Activated T-helper 2 cell treated with anti-CD3 and anti-CD28 coated beads, Interferon-gamma antibody, Interleukin-2, Interleukin-4, amounts not matched to agents 10 μg/mL and 5 μg/mL and 100 μg/mL, durations not matched to agents 14 hours and 24 hours and 36 hours (primary cell): ENCODE measurements at regions of chr2 and their contacts with region 1.

Region 1: DNA sequence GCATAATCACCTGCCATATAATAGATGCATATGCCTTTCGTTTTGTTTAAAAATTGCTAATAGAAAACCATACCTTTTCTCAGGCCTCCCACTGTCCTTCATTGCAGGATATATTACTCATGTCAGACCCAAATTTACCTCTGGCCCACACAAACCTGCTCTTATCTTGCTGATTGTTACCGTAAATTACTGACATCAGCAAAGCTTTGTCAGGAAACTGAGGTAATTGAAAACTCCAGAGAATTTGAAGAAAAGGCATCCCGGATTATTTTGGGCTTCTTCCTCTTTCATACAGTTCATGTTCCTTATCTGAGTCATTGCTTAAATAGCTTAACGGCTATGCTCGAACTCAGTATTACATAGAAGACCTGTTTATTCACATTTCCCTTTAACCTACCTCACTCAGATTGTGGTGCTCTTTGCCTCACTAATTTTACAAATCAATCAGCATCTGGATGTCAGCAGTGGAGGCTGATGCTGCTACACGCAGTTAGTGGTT is 145.7 kb downstream of the ZEB2 start:
- DNase-seq: no peak
- H3K4me3 Mint-ChIP-seq: no peak overlapping the region
- H3K27ac Mint-ChIP-seq: peak overlapping the region; percentile 86
- H3K4me1 Mint-ChIP-seq: peaks cover 83% of the 10 kb centered on the region
- H3K27me3 Mint-ChIP-seq: no peaks in the 10 kb centered on the region

Region 2: GRCh38 chr2:144183727-144184126 is 190.5 kb before region 1 on chr2:
- intact Hi-C with region 1: loop called (anchors 5 kb)
- DNase-seq: peak; percentile 76
- H3K4me3 Mint-ChIP-seq: peak overlapping the region; percentile 44
- H3K27ac Mint-ChIP-seq: peak overlapping the region; percentile 94
- H3K4me1 Mint-ChIP-seq: peaks cover 56% of the 10 kb centered on the region
- H3K27me3 Mint-ChIP-seq: no peaks in the 10 kb centered on the region

Region 3: DNA sequence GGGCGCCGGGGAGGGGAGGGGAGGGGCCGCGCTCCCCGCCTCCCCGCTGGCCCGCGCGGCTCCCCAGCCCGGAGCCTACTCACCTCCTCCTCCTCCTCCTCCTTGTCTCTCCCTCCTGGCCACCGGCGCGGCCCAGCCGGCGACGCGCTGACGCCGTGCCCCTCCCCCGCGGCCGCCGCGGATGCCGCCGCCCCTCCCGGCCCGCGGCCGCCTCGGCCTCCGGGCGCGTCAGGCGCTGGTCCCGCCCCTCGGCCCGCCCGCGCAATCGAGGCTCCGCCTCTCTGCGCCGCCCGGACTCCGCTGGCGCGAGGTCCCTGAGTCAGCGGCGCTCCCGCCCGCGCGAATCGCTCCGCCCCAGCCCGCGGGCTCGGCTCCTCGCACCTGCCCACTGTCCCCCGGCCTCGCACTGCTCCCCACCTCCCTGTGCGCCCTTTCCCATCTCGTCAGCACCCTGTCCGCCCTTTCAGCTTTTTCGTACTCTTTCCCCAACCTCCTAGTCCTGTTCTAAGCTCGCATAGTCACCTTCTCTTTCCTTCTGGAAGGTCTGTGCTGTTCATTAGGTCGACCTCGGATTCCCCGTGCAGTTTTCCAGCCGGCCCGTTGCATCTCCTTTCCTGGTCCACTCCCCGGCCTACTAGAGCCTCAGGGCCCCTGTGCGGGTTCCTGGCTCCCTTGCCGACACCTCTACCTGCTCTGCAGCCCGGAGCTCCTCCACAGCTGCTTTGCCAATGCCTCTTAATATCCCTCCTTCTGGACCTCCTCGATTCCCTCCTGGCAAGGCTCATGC is 41.7 kb before region 1 on chr2:
- intact Hi-C with region 1: loop called (anchors 1 kb)
- DNase-seq: peak; percentile 88
- H3K4me3 Mint-ChIP-seq: peak overlapping the region; percentile 85
- H3K27ac Mint-ChIP-seq: peak overlapping the region; percentile 95
- H3K4me1 Mint-ChIP-seq: peaks cover 46% of the 10 kb centered on the region
- H3K27me3 Mint-ChIP-seq: no peaks in the 10 kb centered on the region

Region 4: DNA sequence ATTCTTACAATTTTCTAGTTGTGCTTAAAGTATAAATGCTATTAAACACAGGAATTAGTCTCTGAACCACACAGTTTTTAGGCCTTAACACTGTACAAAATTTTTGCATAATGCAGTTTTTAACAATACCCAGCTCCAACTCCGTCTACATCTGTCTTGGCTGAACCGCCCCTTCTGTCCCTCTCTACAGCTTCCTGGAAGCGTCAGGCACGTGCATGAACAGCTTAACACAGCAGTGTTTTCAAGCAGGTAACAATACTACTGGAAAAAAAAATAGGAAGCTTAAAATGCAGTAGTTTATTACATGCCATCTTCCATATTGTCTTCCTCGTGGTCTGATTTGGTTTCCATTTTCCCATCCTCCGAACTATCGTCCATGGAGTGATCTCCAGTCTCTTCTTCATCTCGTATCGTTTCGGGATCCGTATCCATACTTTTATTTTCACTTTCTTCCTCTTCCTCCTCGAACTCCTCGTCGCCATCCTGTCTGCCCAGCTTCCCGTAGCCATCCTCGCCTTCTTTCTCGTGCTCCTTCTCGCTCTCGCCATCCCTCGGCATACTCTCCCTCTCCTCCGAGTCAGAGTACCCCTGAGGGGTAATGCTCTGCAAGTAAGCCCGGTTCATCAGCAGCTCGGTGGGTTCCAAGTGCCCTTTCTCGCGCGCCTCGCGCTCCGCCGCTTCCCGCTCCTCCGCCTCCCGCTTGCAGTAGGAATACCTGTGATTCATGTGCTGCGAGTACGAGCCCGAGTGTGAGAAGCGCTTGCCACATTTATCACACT is 15.1 kb after region 1 on chr2:
- intact Hi-C with region 1: no loop called
- DNase-seq: no peak
- H3K4me3 Mint-ChIP-seq: no peak overlapping the region
- H3K27ac Mint-ChIP-seq: no peak overlapping the region
- H3K4me1 Mint-ChIP-seq: peaks cover 4% of the 10 kb centered on the region
- H3K27me3 Mint-ChIP-seq: peaks cover 2% of the 10 kb centered on the region

Region 5: DNA sequence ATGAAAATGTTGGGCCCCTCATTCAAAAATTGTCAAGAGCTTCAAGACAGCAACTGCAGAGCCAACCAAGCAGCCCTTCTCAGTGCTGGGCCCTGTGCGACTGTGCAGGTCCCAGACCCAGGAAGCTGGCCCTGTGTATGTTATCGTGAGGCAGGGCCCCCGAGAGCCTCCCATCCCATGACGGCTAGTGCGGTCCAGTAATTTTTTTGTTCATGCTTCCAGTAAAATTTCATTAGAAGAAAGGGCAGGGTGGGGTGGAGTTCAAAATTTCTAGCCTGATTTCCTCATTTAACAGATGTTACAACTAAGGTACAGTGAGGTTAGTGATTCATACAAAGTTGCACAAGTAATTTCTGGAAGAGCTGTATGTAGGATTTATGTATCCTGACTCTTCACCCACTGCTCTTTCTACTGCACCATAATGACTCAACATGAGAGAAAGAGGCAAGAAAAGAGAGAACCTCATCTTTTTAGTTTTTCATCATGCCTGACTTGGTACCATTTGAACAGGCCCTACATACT is 40.2 kb after region 1 on chr2:
- intact Hi-C with region 1: loop called (anchors 5 kb)
- DNase-seq: no peak
- H3K4me3 Mint-ChIP-seq: no peak overlapping the region
- H3K27ac Mint-ChIP-seq: peak overlapping the region; percentile 81
- H3K4me1 Mint-ChIP-seq: peaks cover 24% of the 10 kb centered on the region
- H3K27me3 Mint-ChIP-seq: no peaks in the 10 kb centered on the region